Vagina (tissue), 2 donors: ENCODE measurements at regions of chr9 and their contacts with region 1.

Region 1: GRCh38 chr9:97615439-97616072 is 17.6 kb downstream of the TSTD2 start:
- DNase-seq: no peak
- H3K4me3 ChIP-seq: no peak overlapping the region
- H3K27ac ChIP-seq: no peak overlapping the region
- H3K4me1 ChIP-seq: no peaks in the 10 kb centered on the region
- H3K27me3 ChIP-seq: no peaks in the 10 kb centered on the region
- CTCF ChIP-seq: peak; percentile 75 to 84 (median 83)
- POLR2A ChIP-seq: no peak

Region 2: GRCh38 chr9:97411789-97412625 is 203.5 kb before region 1 on chr9 and contains the start of gene TDRD7:
- intact Hi-C with region 1: loop called (anchors 5 kb)
- DNase-seq: no peak
- H3K4me3 ChIP-seq: peak within 1 kb of the TSS; percentile 75 to 96
- H3K27ac ChIP-seq: peak within 1 kb of the TSS; percentile 92
- H3K4me1 ChIP-seq: peaks cover 20% of the 10 kb centered on the region
- H3K27me3 ChIP-seq: no peaks in the 10 kb centered on the region
- CTCF ChIP-seq: peak; percentile 96 to 97 (median 97)
- POLR2A ChIP-seq: no peak
- total RNA-seq, gene TDRD7: 13.5 TPM

Region 3: GRCh38 chr9:97468658-97469448 is 146.7 kb before region 1 on chr9:
- intact Hi-C with region 1: loop called (anchors 2 kb)
- DNase-seq: no peak
- H3K4me3 ChIP-seq: no peak overlapping the region
- H3K27ac ChIP-seq: peak overlapping the region; percentile 60
- H3K4me1 ChIP-seq: peaks cover 11% of the 10 kb centered on the region
- H3K27me3 ChIP-seq: no peaks in the 10 kb centered on the region
- CTCF ChIP-seq: peak; percentile 39 to 88 (median 79)
- POLR2A ChIP-seq: no peak

Region 4: DNA sequence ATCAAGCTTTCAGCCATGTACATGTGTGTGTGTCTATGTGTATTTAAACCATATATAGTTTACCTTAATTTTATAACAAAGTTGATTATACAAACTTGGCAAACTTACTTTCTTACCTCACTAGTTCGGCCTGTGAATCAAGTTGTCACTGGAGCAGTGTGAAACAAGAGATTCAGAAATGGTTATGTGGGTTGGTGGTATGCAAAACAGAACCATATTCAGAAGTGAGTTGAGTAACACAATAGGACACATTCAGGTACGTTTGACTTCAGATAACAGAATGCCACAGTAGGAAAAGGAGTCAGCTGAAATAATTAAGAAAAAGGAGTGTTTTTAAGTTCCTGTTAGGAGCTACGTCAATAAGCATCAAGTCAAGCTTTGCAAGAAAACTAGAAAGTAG is 60.1 kb after region 1 on chr9:
- intact Hi-C with region 1: no loop called
- DNase-seq: no peak
- H3K4me3 ChIP-seq: no peak overlapping the region
- H3K27ac ChIP-seq: no peak overlapping the region
- H3K4me1 ChIP-seq: no peaks in the 10 kb centered on the region
- H3K27me3 ChIP-seq: no peaks in the 10 kb centered on the region
- CTCF ChIP-seq: no peak
- POLR2A ChIP-seq: no peak

Region 5: GRCh38 chr9:98687916-98688315 is 1072.4 kb after region 1 on chr9:
- intact Hi-C with region 1: no loop called
- DNase-seq: no peak
- H3K4me3 ChIP-seq: no peak overlapping the region
- H3K27ac ChIP-seq: no peak overlapping the region
- H3K4me1 ChIP-seq: no peaks in the 10 kb centered on the region
- H3K27me3 ChIP-seq: no peaks in the 10 kb centered on the region
- CTCF ChIP-seq: no peak
- POLR2A ChIP-seq: no peak